GM12878 (cell line): ENCODE measurements at regions of chr18 and their contacts with region 1.

Region 1: DNA sequence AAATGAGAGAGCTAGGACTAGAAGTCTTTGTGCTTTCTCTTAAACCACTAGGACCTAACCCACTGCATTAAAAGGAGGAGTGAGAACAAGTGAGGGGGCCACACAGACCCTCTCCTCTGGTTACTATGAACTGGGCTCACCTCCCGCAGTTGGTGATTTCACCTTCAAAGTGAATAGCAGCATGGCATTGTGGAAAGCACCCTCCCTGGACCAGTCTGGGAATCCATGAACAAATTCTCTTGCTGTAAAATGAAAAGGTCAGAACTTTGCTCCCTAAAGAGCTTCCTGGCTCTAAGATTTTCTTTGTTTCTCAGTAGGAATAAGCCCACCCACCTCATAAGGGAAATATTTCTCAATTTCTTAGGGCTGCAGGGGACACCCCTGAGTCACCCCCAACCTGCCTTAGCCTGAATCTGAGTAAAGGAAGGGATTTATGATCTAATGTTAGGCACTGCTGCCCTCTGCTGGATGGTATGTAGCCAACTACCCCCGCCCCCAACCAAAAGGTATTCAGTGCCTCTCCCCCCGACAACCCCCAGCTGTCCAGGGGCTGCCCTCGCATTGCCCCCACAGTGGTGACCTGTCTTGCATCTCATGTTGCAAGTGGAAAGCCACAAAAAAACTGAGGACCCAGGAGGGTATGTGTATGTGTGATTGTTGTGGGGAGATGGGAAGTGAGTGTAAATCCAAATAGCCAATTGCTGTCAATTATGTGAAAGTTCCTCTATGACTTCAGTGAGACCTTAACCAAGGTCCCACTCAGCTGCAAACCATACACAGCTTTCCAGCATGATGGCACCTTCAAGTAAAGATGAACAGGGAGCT is 230.9 kb upstream of the SLC14A2 start:
- DNase-seq: peak; percentile 8
- ATAC-seq: peak; percentile 87
- H3K4me3 ChIP-seq: no peak overlapping the region
- H3K27ac ChIP-seq: no peak overlapping the region
- H3K4me1 ChIP-seq: no peaks in the 10 kb centered on the region
- H3K27me3 ChIP-seq: peaks cover 0 to 2% of the 10 kb centered on the region in 2 experiments; a peak in 1 of 4 replicates
- CTCF ChIP-seq: peak; percentile 51 to 72 (median 67); a peak in 5 of 6 replicates
- EP300 ChIP-seq: no peak
- POLR2A ChIP-seq: no peak
- RAD21 ChIP-seq: peak; percentile 83

Region 2: GRCh38 chr18:44098551-44099098 is 1285.7 kb before region 1 on chr18:
- CTCF ChIA-PET with region 1: interaction called, 7 read pairs
- POLR2A ChIA-PET with region 1: no interaction called
- RAD21 ChIA-PET with region 1: interaction called, 10 read pairs
- SMC1A ChIA-PET with region 1: interaction called, 3 read pairs
- in situ Hi-C with region 1: no loop called
- intact Hi-C with region 1: loop called (anchors 1 kb)
- DNase-seq: no peak
- ATAC-seq: peak; percentile 79
- H3K4me3 ChIP-seq: no peak overlapping the region
- H3K27ac ChIP-seq: no peak overlapping the region
- H3K4me1 ChIP-seq: no peaks in the 10 kb centered on the region
- H3K27me3 ChIP-seq: no peaks in the 10 kb centered on the region
- CTCF ChIP-seq: peak; percentile 24 to 35 (median 26); a peak in 3 of 6 replicates
- EP300 ChIP-seq: no peak
- POLR2A ChIP-seq: no peak
- RAD21 ChIP-seq: 0 out of 2 replicates have a peak, but pooled peaks have one; percentile 15

Region 3: DNA sequence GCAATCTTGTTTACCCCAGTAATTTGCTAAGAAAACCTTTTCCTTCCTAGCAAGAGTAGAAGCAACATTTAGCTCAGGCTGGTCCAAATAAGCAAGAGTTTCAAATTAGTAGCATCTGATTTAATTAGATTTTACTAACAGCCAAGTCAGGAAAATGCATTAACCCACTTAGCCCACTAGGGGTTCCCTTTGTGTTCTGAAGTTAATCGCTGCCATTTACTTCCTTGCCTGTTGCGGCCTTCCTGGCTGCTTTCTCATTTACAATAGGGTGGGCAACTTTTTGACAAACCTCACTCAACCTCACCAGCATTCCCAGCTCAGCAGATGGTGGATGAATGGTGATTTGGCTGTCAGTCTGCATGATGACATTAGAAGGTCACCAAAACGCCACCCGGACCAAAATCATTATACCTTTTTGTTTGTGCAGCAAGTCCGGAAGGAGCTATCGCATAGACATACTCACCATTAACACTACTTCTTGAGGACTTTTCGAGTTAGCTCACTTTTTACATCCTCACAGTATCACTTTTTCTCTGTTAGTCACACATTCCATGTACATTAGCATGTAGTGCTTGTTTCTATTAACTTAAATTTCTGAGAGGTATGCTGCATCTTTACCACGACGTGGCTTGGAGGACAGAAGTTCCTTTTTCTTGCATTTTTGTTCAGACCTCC is 805.2 kb before region 1 on chr18:
- CTCF ChIA-PET with region 1: no interaction called
- POLR2A ChIA-PET with region 1: no interaction called
- RAD21 ChIA-PET with region 1: no interaction called
- SMC1A ChIA-PET with region 1: interaction called, 3 read pairs
- in situ Hi-C with region 1: no loop called
- intact Hi-C with region 1: loop called (anchors 10 kb)
- DNase-seq: no peak
- ATAC-seq: peak; percentile 65; the same call in 2 of the 3 replicates
- H3K4me3 ChIP-seq: no peak overlapping the region
- H3K27ac ChIP-seq: no peak overlapping the region
- H3K4me1 ChIP-seq: no peaks in the 10 kb centered on the region
- H3K27me3 ChIP-seq: 0 out of 4 replicates have a peak, but pooled peaks cover 0 to 1% of the 10 kb centered on the region in 2 experiments
- CTCF ChIP-seq: peak; percentile 63 to 78 (median 67); a peak in 5 of 6 replicates
- EP300 ChIP-seq: no peak
- POLR2A ChIP-seq: no peak
- RAD21 ChIP-seq: peak; percentile 68

Region 4: DNA sequence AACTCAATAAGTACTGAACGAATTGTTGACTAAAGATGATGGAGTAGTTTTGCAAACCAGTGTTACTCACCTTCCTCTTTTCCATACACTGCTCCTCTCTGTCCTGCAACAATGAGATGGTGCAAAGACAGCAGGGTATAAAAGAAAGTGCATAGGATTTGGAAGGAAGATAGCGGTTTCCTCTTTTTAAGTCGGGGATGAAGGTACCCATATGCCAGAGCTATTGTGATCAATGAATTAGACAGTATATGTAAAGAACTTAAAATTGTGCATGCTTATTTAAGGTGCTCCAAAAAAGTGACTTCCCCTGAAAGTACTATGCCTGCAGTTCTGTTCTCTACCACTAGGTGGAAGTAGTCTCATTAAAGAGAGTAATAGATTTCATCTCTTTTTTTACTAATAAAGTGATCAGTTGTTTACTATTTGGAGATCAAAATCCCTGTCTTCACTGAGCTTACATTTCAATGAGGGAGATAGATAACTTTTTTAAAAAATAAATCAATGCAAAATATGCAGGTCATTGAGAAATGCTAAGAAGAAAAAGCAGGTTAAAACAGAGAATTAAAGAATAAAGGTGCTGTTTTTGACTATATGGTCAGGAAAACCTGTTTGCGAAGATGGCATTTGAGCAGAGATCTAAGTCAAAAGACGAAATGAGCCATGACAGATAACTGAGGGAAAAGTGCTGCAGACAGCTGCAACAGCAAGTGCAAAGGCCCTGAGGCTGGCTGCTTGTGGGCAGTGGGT is 108.8 kb before region 1 on chr18:
- CTCF ChIA-PET with region 1: interaction called, 78 read pairs
- POLR2A ChIA-PET with region 1: no interaction called
- RAD21 ChIA-PET with region 1: no interaction called
- SMC1A ChIA-PET with region 1: interaction called, 18 read pairs
- in situ Hi-C with region 1: no loop called
- intact Hi-C with region 1: loop called (anchors 2 kb)
- DNase-seq: no peak
- ATAC-seq: no peak
- H3K4me3 ChIP-seq: no peak overlapping the region
- H3K27ac ChIP-seq: no peak overlapping the region
- H3K4me1 ChIP-seq: no peaks in the 10 kb centered on the region
- H3K27me3 ChIP-seq: no peaks in the 10 kb centered on the region; a peak in 3 of 4 replicates
- CTCF ChIP-seq: peak; percentile 50 to 76 (median 73)
- EP300 ChIP-seq: no peak
- POLR2A ChIP-seq: no peak
- RAD21 ChIP-seq: peak; percentile 39

Region 5: GRCh38 chr18:45412577-45412976 is 28.2 kb after region 1 on chr18:
- CTCF ChIA-PET with region 1: no interaction called
- POLR2A ChIA-PET with region 1: no interaction called
- RAD21 ChIA-PET with region 1: no interaction called
- SMC1A ChIA-PET with region 1: no interaction called
- in situ Hi-C with region 1: no loop called
- intact Hi-C with region 1: no loop called
- DNase-seq: peak; percentile 1
- ATAC-seq: peak; percentile 65
- H3K4me3 ChIP-seq: no peak overlapping the region
- H3K27ac ChIP-seq: no peak overlapping the region
- H3K4me1 ChIP-seq: no peaks in the 10 kb centered on the region
- H3K27me3 ChIP-seq: no peaks in the 10 kb centered on the region
- CTCF ChIP-seq: no peak
- EP300 ChIP-seq: no peak
- POLR2A ChIP-seq: no peak
- RAD21 ChIP-seq: no peak